Activated CD8-positive, alpha-beta T cell treated with anti-CD3 and anti-CD28 coated beads, Interleukin-2, amount 10 ng/mL, durations not matched to agents 7 days and 5 days (primary cell): ENCODE measurements at regions of chr1 and their contacts with region 1.

Region 1: GRCh38 chr1:234188454-234188792 is 184.8 kb upstream of the COA6 start:
- DNase-seq: peak; percentile 41
- ATAC-seq: no peak
- H3K4me3 Mint-ChIP-seq: no peak overlapping the region
- H3K27ac Mint-ChIP-seq: no peak overlapping the region
- H3K4me1 Mint-ChIP-seq: peaks cover 5% of the 10 kb centered on the region
- H3K27me3 Mint-ChIP-seq: peaks cover 54% of the 10 kb centered on the region

Region 2: DNA sequence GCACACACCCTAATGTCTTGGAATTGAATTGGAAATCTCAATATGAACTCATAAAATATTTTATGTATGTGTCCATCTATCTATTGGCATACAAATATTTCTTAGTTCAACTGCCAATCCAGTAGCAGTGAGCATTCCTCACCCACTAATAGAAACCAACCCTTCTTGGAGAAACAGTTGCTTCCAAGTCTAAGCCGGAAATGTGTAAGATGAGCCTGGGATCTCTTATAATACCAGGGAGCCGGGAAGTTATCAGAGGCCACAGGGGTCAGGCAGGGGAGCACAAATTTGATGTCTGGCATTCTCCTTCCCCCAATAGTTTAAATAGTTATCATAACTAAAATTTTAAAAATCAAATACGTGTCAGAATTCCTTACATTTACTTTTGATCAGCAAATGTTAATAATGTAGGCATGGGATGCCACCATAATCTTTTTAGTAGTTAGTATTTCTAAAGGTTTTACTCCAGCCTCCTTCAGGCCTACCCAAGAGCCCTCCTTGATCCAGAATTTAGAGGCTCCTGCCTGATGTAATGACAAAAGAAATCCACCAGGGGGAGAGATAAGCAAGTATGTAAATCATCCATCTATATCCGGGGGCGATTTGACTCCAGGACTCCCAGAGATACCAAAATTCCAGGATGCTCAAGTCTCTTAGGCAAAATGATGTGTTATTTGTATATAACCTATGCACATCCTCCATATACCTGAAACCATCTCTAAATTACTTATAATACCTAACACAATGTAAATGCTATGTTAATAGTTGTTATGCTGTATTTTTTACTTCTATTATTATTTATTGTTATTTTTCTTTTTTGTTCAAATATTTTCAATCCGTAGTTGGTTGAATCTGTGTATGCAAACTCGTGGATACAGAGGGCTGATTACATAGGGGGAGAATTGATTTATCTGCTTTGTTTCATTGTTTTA is 33.8 kb before region 1 on chr1:
- CTCF ChIA-PET with region 1: interaction called, 15 read pairs
- POLR2A ChIA-PET with region 1: no interaction called
- DNase-seq: peak; percentile 61
- ATAC-seq: peak; percentile 70
- H3K4me3 Mint-ChIP-seq: no peak overlapping the region
- H3K27ac Mint-ChIP-seq: no peak overlapping the region
- H3K4me1 Mint-ChIP-seq: peaks cover 2% of the 10 kb centered on the region
- H3K27me3 Mint-ChIP-seq: peaks cover 22% of the 10 kb centered on the region

Region 3: GRCh38 chr1:234170622-234171021 is 17.8 kb before region 1 on chr1:
- CTCF ChIA-PET with region 1: interaction called, 40 read pairs
- POLR2A ChIA-PET with region 1: no interaction called
- DNase-seq: peak; percentile 71
- ATAC-seq: peak; percentile 78
- H3K4me3 Mint-ChIP-seq: peak overlapping the region; percentile 50
- H3K27ac Mint-ChIP-seq: peak overlapping the region; percentile 87
- H3K4me1 Mint-ChIP-seq: peaks cover 73% of the 10 kb centered on the region
- H3K27me3 Mint-ChIP-seq: no peaks in the 10 kb centered on the region